Upper lobe of right lung (tissue), 1 donor: ENCODE measurements at regions of chr14 and their contacts with region 1.

Region 1: GRCh38 chr14:34098045-34098984 is 147.4 kb upstream of the EGLN3 start:
- DNase-seq: no peak
- ATAC-seq: peak; percentile 20
- H3K4me3 ChIP-seq: no peak overlapping the region
- H3K27ac ChIP-seq: no peak overlapping the region
- H3K4me1 ChIP-seq: no peaks in the 10 kb centered on the region
- H3K27me3 ChIP-seq: no peaks in the 10 kb centered on the region
- CTCF ChIP-seq: peak; percentile 50

Region 2: DNA sequence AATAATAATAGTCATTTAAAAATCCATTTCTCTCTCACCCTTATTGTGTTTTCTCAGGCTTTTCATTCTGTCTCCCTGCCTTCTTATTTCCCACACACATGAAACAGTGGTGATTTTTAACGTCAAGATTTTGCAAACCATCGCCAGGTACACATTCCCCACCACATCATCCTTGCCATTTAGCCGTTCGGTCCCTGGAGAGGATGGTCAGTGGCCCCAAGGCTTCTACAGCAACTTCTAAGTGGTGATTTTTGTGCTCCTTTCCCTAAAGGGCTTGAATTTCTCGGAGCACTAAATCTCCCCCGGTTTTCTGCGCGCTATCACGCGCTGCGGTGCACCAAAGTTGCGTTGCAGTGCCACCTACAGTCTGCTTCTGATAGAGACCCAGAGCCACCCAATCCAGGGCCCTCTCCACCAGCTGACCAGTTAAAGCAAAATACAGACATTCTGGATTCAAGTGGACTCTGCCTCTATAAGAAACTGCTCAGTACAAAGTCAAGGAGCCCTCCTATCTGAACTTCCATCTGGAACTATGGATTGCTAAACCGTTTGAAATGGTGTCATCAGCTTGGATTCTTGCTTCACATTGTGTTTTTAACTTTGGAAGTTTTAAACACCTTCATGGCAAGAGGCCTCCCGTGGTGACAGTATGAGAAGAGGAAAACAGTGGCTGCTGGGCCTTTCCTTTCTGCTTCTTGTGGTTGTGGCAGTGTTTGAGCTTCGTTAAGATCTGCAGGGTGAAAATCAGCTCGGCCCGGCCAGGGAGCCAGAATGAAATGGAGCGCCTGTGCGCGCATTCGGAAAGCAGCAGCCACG is 129.7 kb after region 1 on chr14:
- intact Hi-C with region 1: loop called (anchors 10 kb)
- DNase-seq: peak; percentile 68
- ATAC-seq: peak; percentile 95
- H3K4me3 ChIP-seq: no peak overlapping the region
- H3K27ac ChIP-seq: no peak overlapping the region
- H3K4me1 ChIP-seq: no peaks in the 10 kb centered on the region
- H3K27me3 ChIP-seq: no peaks in the 10 kb centered on the region
- CTCF ChIP-seq: peak; percentile 80